Heart left ventricle (tissue), 16 donors: ENCODE measurements at regions of chr7 and their contacts with region 1.

Region 1: DNA sequence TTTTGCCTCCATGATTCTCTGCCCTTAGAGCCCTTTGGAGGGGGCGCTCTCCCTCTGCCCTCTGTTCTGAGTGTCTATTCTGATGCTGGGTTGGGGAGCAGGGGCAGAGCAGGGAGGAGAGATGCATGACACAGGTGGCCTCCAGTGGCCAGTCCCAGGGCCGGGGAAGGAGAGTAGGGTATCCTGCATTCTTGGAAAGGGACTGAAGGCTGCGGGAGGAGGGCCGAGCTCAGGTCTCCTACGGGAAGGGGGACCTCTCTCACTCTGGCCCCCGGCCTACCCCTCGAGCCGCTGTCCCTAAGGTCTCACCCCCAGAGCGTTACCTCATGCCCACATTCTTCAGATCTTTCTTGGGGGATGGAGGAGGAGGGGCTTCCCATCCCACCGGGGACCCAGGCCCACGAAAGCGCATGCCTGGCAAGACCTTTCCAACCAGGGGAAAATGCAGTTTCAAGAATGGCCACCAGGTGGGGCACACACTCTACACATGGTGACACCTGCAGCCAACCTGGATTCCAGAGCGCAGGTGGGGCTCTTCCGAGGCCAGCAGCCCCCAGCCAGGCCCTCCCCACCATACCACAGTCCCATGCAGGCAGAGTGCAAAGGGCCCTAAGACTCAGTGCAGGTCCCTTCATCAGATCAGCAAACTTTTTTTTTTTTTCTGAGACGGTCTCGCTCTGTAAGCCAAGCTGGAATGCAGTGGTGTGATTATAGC is 86.4 kb downstream of the MYL10 start:
- DNase-seq: peak; percentile 45 to 68 (median 57)
- ATAC-seq: peak in 3 of 4 donors; percentile 34 to 52 (median 35)
- H3K4me3 ChIP-seq: no peak overlapping the region
- H3K27ac ChIP-seq: no peak overlapping the region
- H3K4me1 ChIP-seq: peaks cover 0 to 9% (median 0%) of the 10 kb centered on the region in 12 donors
- H3K27me3 ChIP-seq: peaks cover 0 to 5% (median 0%) of the 10 kb centered on the region in 9 donors
- CTCF ChIP-seq: peak; percentile 74 to 93 (median 89)
- POLR2A ChIP-seq: no peak

Region 2: DNA sequence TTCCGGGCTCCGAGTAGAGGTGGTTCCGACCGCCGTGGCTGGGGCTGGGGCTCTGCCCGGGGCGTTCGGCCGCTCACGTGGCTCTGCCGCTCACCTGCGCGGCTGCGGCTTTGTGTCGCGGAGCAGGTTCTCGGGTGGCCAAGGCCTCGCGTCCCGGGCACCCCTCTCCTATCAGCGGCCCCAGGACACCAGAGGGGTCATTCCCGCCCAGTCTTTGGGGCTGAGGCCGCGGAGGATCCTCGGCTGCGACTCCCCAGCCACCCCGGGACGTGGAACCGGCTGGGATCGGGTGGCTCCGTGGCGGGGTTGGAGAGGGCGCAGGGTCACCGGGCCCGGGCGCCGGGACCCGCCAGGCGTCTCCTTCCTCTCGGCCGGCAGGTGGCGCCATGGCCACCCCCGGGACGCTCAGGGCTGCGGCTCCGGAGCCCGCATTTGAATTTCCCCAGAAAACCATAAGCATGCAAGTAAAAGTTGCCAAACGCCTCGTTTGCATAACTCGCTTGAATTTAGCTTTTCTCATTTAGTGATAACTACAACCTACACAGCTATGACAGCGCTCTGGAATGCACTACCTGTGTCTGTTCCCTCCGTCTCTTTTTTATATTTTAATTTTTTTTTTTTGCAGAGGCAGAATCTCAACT is 178.8 kb before region 1 on chr7:
- intact Hi-C with region 1: loop called in 9 of 10 experiments (anchors 2 to 10 kb)
- DNase-seq: peak; percentile 44 to 78 (median 57)
- ATAC-seq: peak; percentile 67 to 96 (median 88)
- H3K4me3 ChIP-seq: peak overlapping the region; percentile 41 to 68 (median 58)
- H3K27ac ChIP-seq: no peak overlapping the region
- H3K4me1 ChIP-seq: peaks cover 0 to 20% (median 11%) of the 10 kb centered on the region in 12 donors
- H3K27me3 ChIP-seq: peaks cover 0 to 41% (median 8%) of the 10 kb centered on the region in 9 donors
- CTCF ChIP-seq: peak; percentile 87 to 97 (median 95)
- POLR2A ChIP-seq: no peak

Region 3: GRCh38 chr7:101669307-101669706 is 126.6 kb after region 1 on chr7:
- intact Hi-C with region 1: no loop called
- DNase-seq: no peak
- ATAC-seq: no peak
- H3K4me3 ChIP-seq: no peak overlapping the region
- H3K27ac ChIP-seq: no peak overlapping the region
- H3K4me1 ChIP-seq: peaks cover 0 to 7% (median 0%) of the 10 kb centered on the region in 12 donors
- H3K27me3 ChIP-seq: peaks cover 0 to 5% (median 0%) of the 10 kb centered on the region in 9 donors
- CTCF ChIP-seq: peak in 2 of 12 donors; percentile 7 to 17
- POLR2A ChIP-seq: no peak

Region 4: DNA sequence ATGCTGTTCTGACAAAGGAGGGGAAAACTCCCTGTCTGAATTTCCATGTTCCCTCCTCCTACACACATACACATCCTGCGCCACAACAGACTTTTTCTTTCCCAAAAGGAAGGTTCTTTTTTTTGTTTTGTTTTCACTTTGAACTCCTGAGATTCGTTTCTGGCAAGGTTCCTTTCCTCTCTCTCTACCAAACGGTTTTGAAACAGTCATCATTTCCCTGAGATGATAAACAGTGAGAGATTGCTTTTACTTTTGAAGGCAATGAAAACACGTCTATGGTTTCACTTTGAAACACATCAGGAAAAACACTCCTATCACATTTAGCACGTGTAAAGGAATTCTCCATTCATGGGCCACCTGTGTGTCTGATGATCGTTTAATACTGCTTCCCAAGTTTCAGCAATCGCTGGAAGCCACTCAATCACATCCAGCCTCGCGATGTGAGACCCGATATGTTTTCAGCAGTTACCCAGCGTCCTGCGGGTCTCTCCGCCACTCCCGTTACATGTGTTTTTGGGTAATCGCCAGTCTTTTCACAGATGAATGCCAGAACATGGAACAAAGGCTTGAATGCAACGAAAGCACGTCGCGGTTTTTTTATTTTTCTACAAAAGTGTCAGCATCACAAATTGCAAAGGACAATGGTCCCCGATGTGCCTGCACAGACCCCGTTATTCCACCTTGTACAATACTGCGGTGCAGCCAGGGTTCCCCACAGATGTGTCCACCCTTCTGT is 211.9 kb after region 1 on chr7:
- intact Hi-C with region 1: loop called in 1 of 10 experiments (anchors 5 kb)
- DNase-seq: no peak
- ATAC-seq: peak in 1 of 4 donors; percentile 28
- H3K4me3 ChIP-seq: peak overlapping the region in 11 of 12 donors; percentile 31 to 63 (median 48)
- H3K27ac ChIP-seq: peak overlapping the region in 3 of 12 donors; percentile 29 to 41 (median 35)
- H3K4me1 ChIP-seq: peaks cover 0 to 7% (median 0%) of the 10 kb centered on the region in 12 donors
- H3K27me3 ChIP-seq: peaks cover 0 to 7% (median 0%) of the 10 kb centered on the region in 9 donors
- CTCF ChIP-seq: no peak
- POLR2A ChIP-seq: no peak

Region 5: GRCh38 chr7:101985903-101986734 is 443.4 kb after region 1 on chr7:
- intact Hi-C with region 1: no loop called
- DNase-seq: no peak
- ATAC-seq: peak; percentile 19 to 68 (median 56)
- H3K4me3 ChIP-seq: no peak overlapping the region
- H3K27ac ChIP-seq: peak overlapping the region in 8 of 12 donors; percentile 3 to 70 (median 38)
- H3K4me1 ChIP-seq: peaks cover 0 to 22% (median 4%) of the 10 kb centered on the region in 12 donors
- H3K27me3 ChIP-seq: no peaks in the 10 kb centered on the region
- CTCF ChIP-seq: no peak
- POLR2A ChIP-seq: no peak

Region 6: DNA sequence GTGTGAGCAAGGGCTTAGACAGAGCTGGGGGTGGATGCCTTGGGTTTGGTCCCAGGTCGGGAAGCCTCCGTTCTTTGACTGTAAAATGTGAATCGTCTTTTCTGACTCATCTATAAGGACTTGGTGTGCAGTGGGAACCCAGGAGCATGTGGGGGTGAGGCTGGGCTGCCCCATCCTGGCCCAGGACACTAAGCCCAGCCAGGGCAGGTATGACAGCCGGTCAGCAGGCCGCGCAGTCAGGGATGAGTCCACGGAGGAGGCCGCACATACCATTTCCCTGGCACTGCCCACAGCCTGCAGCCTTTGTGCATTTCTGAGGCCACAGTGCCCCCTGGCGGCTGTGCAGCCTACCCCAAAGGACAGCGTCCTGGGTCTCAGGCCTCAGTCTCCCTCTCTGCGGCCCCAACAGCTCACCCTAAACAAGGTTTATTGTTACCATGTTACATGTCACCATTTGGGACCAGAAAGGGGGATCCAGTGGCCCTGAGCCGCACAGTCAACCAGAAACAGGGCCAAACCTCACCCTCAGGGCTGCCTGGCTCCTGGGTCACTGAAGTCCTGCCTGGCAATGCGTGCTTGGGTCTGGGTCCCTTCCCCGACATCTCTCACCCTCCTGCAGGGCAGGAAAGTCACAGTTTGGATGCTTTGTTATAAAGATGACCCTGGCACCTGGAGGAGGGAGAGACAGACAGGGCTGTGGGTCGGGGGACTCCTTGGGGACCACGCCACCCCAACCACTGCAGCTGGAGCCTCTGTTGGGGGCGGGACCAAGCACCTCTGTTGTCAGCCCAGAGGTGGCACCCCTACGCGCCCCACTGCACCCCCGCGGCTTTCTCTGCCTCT is 729.6 kb after region 1 on chr7:
- intact Hi-C with region 1: loop called (anchors 1 to 2 kb)
- DNase-seq: peak; percentile 69 to 88 (median 76)
- ATAC-seq: peak; percentile 86 to 90 (median 88)
- H3K4me3 ChIP-seq: no peak overlapping the region
- H3K27ac ChIP-seq: no peak overlapping the region
- H3K4me1 ChIP-seq: peaks cover 0 to 4% (median 0%) of the 10 kb centered on the region in 12 donors
- H3K27me3 ChIP-seq: no peaks in the 10 kb centered on the region
- CTCF ChIP-seq: peak; percentile 85 to 93 (median 88)
- POLR2A ChIP-seq: no peak